Activated B cell treated with CpG ODN at 0.5 μM for 24 hours (primary cell): ENCODE measurements at regions of chr20 and their contacts with region 1.

Region 1: DNA sequence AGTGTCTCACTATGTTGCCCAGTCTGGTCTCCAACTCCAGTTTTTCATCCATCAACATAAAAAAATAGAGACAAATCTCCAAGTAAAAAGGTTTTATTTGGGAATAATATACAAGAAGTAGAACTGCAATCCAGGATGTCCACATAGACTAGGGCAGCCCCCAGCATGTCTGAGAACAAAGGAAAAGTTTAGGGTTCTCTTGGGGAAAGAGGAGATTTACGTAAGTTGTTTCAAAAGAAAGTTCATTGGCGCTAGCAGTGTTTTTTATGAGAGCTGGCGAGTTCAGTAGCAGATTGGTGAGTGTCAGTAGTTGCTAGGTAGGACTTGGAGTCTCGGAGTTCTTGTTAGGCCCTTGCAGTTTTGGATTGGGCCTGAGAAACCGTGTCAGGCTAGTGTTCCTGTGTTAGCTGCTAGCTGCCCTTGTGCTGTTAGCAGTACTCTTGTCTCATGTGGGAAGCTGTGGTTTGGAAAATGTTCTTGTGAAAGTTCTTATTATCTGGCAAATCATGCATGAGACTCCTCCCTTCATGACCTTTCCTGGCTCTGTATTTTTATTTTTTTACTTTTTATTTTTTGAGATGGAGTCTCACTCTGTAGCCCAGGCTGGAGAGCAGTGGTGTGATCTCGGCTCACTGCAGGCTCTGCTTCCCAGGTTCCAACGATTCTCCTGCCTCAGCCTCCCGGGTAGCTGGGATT is 24.7 kb downstream of the TTLL9 start:
- DNase-seq: peak; percentile 25
- ATAC-seq: peak; percentile 100
- H3K4me3 Mint-ChIP-seq: peak overlapping the region; percentile 28
- H3K27ac Mint-ChIP-seq: peak overlapping the region; percentile 86
- H3K4me1 Mint-ChIP-seq: peaks cover 15% of the 10 kb centered on the region
- H3K27me3 Mint-ChIP-seq: no peaks in the 10 kb centered on the region
- CTCF ChIP-seq: no peak

Region 2: GRCh38 chr20:31879143-31879987 is 15.8 kb before region 1 on chr20:
- CTCF ChIA-PET with region 1: no interaction called
- POLR2A ChIA-PET with region 1: interaction called, 14 read pairs
- intact Hi-C with region 1: loop called (anchors 1 kb)
- DNase-seq: peak; percentile 81
- ATAC-seq: peak; percentile 87
- H3K4me3 Mint-ChIP-seq: peak overlapping the region; percentile 93
- H3K27ac Mint-ChIP-seq: peak overlapping the region; percentile 93
- H3K4me1 Mint-ChIP-seq: peaks cover 14% of the 10 kb centered on the region
- H3K27me3 Mint-ChIP-seq: no peaks in the 10 kb centered on the region
- CTCF ChIP-seq: no peak

Region 3: GRCh38 chr20:31943052-31943471 is 47.9 kb after region 1 on chr20:
- CTCF ChIA-PET with region 1: no interaction called
- POLR2A ChIA-PET with region 1: no interaction called
- intact Hi-C with region 1: no loop called
- DNase-seq: no peak
- ATAC-seq: no peak
- H3K4me3 Mint-ChIP-seq: no peak overlapping the region
- H3K27ac Mint-ChIP-seq: no peak overlapping the region
- H3K4me1 Mint-ChIP-seq: no peaks in the 10 kb centered on the region
- H3K27me3 Mint-ChIP-seq: no peaks in the 10 kb centered on the region
- CTCF ChIP-seq: no peak

Region 4: GRCh38 chr20:32040142-32041022 is 145.3 kb after region 1 on chr20:
- CTCF ChIA-PET with region 1: no interaction called
- POLR2A ChIA-PET with region 1: no interaction called
- intact Hi-C with region 1: loop called (anchors 1 kb)
- DNase-seq: peak; percentile 77
- ATAC-seq: peak; percentile 88
- H3K4me3 Mint-ChIP-seq: peak overlapping the region; percentile 78
- H3K27ac Mint-ChIP-seq: peak overlapping the region; percentile 90
- H3K4me1 Mint-ChIP-seq: peaks cover 80% of the 10 kb centered on the region
- H3K27me3 Mint-ChIP-seq: no peaks in the 10 kb centered on the region
- CTCF ChIP-seq: no peak

Region 5: GRCh38 chr20:32411955-32412706 is 517.0 kb after region 1 on chr20:
- CTCF ChIA-PET with region 1: no interaction called
- POLR2A ChIA-PET with region 1: interaction called, 13 read pairs
- intact Hi-C with region 1: no loop called
- DNase-seq: no peak
- ATAC-seq: peak; percentile 80
- H3K4me3 Mint-ChIP-seq: peak overlapping the region; percentile 57
- H3K27ac Mint-ChIP-seq: peak overlapping the region; percentile 42
- H3K4me1 Mint-ChIP-seq: peaks cover 57% of the 10 kb centered on the region
- H3K27me3 Mint-ChIP-seq: no peaks in the 10 kb centered on the region
- CTCF ChIP-seq: no peak